Mammary epithelial cell (primary cell): ENCODE measurements at regions of chr2 and their contacts with region 1.

Region 1: DNA sequence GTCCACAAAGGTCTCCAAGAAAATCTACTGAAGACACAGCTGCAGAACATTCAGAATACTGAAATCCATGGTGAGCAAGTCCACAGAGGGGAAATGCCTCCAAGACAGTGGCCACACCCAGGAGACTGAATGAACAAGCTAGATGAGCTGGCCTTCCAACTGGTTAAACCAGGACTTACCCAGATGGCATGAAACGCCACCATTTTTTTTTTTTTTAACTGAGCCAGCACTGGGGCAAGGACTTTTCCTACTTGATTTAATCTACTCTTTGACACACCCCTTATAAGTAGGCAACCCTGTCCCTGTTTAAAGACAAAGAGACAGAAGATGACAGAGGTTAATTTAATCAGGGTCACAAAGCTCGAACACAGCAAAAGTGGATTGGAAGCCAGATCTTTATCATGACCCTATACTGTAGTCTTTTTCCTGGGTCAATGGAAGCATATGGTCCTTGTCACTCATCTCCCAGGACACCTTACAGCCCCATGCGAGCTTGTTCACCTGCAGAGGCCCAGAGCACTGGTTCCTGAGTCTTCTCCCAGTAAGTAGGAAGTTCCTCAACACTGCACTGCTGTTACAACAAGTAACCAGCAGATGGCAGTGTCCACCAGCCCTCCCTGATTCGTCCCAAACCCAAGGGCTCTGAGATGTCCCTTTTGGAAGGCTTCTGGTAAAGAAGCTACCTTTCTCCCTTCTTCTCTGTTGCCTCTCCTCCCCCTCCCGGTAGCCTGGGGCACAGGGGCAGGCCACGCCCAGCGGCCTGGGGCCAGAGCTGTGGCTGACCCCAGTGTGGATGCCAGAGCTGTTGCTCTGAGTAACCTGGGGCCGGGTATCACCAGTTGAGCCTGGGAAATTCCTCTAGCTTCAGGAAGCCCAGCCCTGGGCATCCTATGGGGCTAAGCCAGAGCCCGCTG is 5.6 kb upstream of the GDF7 start:
- DNase-seq: peak; percentile 80
- H3K4me3 ChIP-seq: no peak overlapping the region
- H3K27ac ChIP-seq: no peak overlapping the region
- H3K4me1 ChIP-seq: peaks cover 16% of the 10 kb centered on the region
- H3K27me3 ChIP-seq: peaks cover 29% of the 10 kb centered on the region
- CTCF ChIP-seq: peak; percentile 98 to 99

Region 2: DNA sequence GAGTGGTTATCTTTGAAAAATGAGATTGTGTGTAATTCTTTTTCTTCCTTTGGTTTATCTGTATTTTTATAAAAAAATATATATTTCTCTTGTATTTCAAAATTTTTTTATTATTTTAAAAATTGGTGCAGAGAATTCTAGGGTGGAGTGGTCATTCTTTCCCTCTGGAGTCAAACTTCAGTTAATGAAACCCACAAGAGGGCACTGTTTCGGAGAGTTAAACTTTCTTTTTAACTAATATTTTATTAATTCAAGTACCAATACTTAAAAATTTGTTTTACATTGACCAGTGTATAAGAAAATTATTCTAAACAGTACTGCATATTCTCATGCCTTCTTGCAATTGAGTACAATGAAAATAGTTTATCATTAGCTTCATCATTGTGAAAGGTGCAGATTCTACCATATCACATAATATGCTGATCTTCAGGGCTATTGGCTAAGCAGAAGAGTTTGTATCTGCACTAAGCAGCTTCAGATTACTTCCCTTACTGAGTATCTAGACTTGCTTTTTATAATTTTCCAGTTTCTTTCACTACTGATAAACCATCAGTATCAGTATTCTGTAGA is 60.5 kb before region 1 on chr2:
- CTCF ChIA-PET with region 1: no interaction called
- dilution Hi-C with region 1: no loop called
- in situ Hi-C with region 1: no loop called
- intact Hi-C with region 1: no loop called
- DNase-seq: no peak
- H3K4me3 ChIP-seq: no peak overlapping the region
- H3K27ac ChIP-seq: no peak overlapping the region
- H3K4me1 ChIP-seq: peaks cover 13% of the 10 kb centered on the region
- H3K27me3 ChIP-seq: no peaks in the 10 kb centered on the region
- CTCF ChIP-seq: peak in 1 of 2 donors; percentile 43

Region 3: GRCh38 chr2:20617892-20618467 is 43.3 kb before region 1 on chr2:
- CTCF ChIA-PET with region 1: no interaction called
- dilution Hi-C with region 1: no loop called
- in situ Hi-C with region 1: no loop called
- intact Hi-C with region 1: no loop called
- DNase-seq: peak; percentile 76
- H3K4me3 ChIP-seq: no peak overlapping the region
- H3K27ac ChIP-seq: no peak overlapping the region
- H3K4me1 ChIP-seq: peaks cover 27% of the 10 kb centered on the region
- H3K27me3 ChIP-seq: no peaks in the 10 kb centered on the region
- CTCF ChIP-seq: peak; percentile 21 to 32

Region 4: GRCh38 chr2:20755132-20755800 is 93.9 kb after region 1 on chr2:
- CTCF ChIA-PET with region 1: no interaction called
- dilution Hi-C with region 1: no loop called
- in situ Hi-C with region 1: no loop called
- intact Hi-C with region 1: loop called (anchors 5 kb)
- DNase-seq: no peak
- H3K4me3 ChIP-seq: no peak overlapping the region
- H3K27ac ChIP-seq: no peak overlapping the region
- H3K4me1 ChIP-seq: no peaks in the 10 kb centered on the region
- H3K27me3 ChIP-seq: no peaks in the 10 kb centered on the region
- CTCF ChIP-seq: no peak

Region 5: DNA sequence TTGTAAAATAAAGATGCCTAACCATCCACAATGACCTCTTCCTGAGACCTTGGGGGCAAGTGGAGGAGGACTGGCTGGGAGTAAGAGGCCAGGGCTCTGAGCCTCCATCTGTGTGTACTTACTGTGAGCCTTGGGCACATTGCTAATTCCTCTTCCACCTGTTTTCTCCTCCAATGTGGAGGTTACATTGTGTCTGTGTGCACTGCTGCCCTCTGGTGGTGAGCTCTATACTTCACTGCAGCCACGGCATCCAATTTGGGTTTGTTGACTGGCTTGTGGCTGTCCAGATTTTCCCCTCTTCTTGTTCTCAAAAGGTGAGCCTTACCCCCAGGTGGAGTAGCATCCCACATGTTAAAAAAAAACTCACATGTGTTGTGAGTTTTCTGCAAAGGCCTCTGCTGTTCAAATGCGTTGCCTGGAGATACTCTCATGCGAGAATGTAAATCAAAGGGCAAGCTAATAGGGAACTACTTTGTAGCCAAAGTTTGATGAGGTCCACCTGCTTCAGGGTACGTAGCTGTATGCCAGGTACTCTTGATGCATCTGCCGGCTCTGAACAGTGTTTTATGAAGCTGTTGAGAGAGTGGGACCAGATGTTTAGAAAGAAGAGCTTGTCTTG is 301.7 kb after region 1 on chr2:
- CTCF ChIA-PET with region 1: interaction called, 18 read pairs
- dilution Hi-C with region 1: no loop called
- in situ Hi-C with region 1: loop called (anchors 10 kb)
- intact Hi-C with region 1: loop called (anchors 1 kb)
- DNase-seq: peak; percentile 46
- H3K4me3 ChIP-seq: no peak overlapping the region
- H3K27ac ChIP-seq: no peak overlapping the region
- H3K4me1 ChIP-seq: no peaks in the 10 kb centered on the region
- H3K27me3 ChIP-seq: peaks cover 2% of the 10 kb centered on the region
- CTCF ChIP-seq: peak; percentile 70 to 84

Region 6: DNA sequence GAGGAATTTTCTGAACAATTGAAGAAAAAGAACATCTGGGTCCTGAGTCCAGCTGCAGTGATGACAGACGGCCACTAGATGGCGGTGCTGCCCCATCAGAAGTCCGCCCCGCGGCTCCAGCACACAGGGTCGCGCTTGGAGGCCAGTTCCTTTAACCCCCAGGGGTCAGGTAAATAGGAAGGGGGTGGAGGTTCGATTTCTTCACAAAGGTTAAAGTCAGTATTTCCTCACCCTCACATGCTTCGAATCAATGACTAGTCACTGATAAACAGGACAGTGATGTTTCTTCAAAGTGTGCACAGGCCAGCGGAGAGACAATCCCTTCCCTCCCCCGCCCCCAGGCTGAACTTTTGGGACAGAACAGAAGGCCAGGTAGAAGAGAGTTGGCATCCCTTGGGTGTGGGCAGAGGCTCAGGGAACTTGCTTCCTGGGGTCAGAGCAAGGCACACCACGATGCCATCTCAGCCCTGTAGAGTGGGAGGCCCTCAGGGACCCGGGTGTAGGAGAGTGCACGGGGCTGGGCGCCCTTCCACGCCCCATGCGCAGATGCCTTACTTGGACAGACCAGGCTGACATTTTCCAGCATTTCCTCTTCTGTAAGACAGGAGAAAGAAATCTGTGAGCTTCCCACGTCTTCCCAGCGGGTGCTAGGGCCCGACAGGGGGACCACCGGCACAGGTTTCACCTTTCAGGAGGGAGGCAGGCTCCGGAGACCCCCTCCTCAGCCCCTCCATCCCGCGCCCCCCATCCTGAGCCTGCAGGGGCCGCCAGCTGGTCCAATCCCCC is 381.8 kb after region 1 on chr2:
- CTCF ChIA-PET with region 1: no interaction called
- dilution Hi-C with region 1: no loop called
- in situ Hi-C with region 1: no loop called
- intact Hi-C with region 1: loop called (anchors 5 kb)
- DNase-seq: peak; percentile 5
- H3K4me3 ChIP-seq: no peak overlapping the region
- H3K27ac ChIP-seq: no peak overlapping the region
- H3K4me1 ChIP-seq: no peaks in the 10 kb centered on the region
- H3K27me3 ChIP-seq: peaks cover 1% of the 10 kb centered on the region
- CTCF ChIP-seq: peak; percentile 86 to 98

Region 7: GRCh38 chr2:21165350-21165749 is 504.0 kb after region 1 on chr2:
- CTCF ChIA-PET with region 1: no interaction called
- dilution Hi-C with region 1: no loop called
- in situ Hi-C with region 1: no loop called
- intact Hi-C with region 1: loop called (anchors 1 kb)
- DNase-seq: no peak
- H3K4me3 ChIP-seq: no peak overlapping the region
- H3K27ac ChIP-seq: no peak overlapping the region
- H3K4me1 ChIP-seq: no peaks in the 10 kb centered on the region
- H3K27me3 ChIP-seq: no peaks in the 10 kb centered on the region
- CTCF ChIP-seq: peak; percentile 17 to 37